Posterior cingulate gyrus (tissue), 11 donors: ENCODE measurements at regions of chr18 and their contacts with region 1.

Region 1: DNA sequence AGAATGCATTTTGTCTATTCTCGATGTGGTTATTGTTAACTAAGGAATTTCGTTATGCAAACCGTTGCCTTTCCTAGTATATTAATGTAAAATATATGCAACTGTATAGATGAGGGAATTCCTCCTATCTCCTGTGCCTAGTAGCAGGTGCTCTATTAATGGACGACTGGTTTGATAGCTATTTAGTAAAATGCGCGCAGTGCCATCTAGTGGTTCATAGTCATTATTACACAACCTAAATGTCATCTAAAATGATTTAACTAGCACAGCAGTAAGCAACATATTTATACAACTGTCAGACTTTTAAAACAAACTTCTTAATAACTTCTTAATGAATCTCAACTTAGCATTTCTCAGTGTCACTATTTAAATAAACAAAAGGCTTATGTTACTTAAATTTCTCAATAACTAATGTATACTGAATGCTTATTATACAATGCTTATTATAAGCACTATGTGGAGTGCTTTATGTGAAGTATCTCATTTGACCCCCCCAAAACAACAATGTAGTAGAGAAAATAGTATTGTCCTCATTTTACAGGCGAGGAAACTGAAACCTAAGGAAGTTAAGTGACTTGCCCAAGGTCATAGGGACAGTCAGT is 77.9 kb downstream of the DTNA start:
- DNase-seq: peak in 1 of 10 donors; percentile 44

Region 2: DNA sequence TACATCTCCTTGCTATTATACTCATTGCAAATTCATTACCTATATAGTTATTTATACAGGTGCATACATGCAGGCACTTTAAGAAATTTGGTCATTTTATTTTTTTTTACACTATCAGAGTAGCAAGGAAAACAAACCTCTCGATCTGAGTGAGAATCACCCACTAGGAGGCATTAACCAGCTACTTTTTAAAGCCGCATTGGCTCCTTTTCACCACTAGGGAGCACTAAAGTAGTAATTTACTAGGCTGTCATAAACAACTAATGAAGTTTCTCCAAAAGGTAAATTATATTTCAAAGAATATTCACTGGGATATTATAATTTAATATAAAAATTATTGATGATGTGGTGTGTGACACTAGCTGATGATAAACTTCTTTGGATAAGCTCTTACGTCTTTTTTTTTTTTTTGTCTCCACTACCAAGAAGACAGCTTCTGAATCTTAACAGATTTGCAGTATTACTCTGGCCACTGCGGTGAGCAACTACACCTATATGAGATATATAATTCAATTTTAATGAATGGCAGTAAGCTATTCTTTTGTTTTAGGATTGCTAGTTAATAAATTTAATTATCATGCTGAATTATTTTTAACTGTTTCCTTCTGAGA is 665.2 kb before region 1 on chr18:
- intact Hi-C with region 1: loop called (anchors 10 kb)
- DNase-seq: peak in 1 of 10 donors; percentile 16

Region 3: DNA sequence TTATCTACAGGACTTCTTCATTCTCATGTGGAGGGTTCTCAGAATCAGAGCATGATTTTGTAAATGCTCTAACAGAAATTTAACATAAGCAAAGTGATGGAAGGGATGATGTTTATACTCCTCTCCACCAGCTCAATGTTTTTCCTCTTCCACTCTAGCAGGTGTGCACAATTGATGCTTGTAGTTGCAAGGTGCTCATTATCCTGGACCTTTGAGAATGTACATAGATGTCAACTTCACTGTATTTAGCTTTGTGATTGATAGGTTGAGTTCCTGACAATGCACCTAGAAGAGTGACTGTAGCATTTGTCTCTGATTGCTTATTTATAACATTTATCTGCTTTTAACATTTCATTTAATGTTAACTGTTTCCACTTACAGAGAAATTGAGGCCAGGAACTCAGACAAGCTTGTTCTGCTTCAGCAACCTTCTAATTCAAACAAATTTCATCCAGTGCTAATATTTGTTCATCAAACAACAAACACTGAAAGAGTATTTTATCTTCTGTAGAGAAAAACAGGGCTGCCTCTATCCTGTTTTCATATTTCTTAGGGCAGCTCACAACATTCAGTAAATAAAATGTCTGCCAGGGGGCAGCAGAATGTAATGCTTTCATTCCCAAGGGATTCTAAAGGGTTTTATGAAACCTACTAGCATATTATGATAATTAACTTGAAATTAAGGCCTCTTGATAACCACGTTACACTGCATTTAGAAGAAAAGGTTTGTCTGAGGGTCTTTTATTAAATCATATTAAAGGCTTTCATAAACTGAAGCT is 435.5 kb before region 1 on chr18:
- intact Hi-C with region 1: loop called (anchors 5 kb)
- DNase-seq: no peak

Region 4: DNA sequence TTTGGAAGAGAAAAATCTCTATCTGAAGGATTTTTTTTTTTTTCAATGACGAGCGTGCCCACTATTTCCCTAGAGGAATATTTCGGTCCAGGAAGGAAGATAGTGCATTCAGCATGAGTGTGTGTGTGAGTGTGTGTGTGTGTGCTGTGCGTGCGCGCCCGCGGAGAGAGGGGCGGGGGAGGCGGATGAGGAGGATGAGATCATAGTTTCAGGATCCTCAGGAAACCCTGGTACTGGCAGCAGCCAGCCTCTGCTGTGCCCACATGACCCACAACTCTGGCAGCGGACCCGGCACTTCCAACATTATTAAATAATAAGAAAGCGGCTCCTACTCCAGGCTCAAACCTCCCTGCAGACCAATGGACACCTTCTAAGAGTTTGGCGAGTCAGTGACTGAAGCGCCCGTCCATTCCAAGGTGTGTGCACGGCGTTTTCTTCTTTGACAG is 294.9 kb before region 1 on chr18:
- intact Hi-C with region 1: loop called (anchors 10 kb)
- DNase-seq: peak; percentile 69 to 97 (median 80)

Region 5: DNA sequence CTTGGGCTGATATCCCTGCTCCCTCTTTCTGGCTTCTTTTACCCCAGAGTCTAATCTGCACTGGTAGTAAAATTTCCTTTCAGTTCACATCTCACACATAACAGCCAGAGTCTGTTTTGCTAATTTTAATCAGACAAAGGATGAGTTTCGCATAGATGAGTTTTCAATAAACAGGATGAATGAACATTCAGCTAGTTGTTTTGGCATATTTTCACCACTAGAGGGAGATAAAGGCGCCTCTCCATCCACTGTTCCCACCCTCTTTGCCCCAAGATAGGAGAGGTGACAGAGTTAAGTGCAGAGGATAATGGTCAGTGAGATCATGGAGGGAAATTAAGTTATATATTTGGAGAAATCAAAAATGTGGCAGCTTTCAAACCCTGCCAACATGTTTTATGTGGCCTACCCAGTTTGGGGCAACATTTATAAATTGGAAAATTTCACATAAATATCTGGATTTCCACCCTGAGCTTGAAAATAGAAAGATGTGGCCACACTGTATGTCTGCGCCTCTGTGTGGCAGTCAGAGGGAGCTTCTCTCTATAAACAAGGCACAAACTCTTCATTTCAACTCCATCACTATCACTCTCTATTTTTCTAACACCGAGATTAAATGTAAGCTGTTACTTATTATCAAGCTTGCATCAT is 126.4 kb before region 1 on chr18:
- intact Hi-C with region 1: loop called (anchors 5 kb)
- DNase-seq: no peak

Region 6: GRCh38 chr18:34695310-34695709 is 92.7 kb before region 1 on chr18:
- intact Hi-C with region 1: no loop called
- DNase-seq: no peak